ENCODE measurements at regions of chr2 and their contacts with region 1.

Region 1: GRCh38 chr2:101308432-101309210 is at the start of gene RNF149:
- DNase-seq: peak; percentile 87
- H3K4me3 Mint-ChIP-seq: peak within 1 kb of the TSS; percentile 82
- H3K27ac Mint-ChIP-seq: peak within 1 kb of the TSS; percentile 88
- H3K4me1 Mint-ChIP-seq: peaks cover 62% of the 10 kb centered on the region
- H3K27me3 Mint-ChIP-seq: no peaks in the 10 kb centered on the region
- total RNA-seq, gene RNF149: 25.0 to 27.1 TPM

Region 2: DNA sequence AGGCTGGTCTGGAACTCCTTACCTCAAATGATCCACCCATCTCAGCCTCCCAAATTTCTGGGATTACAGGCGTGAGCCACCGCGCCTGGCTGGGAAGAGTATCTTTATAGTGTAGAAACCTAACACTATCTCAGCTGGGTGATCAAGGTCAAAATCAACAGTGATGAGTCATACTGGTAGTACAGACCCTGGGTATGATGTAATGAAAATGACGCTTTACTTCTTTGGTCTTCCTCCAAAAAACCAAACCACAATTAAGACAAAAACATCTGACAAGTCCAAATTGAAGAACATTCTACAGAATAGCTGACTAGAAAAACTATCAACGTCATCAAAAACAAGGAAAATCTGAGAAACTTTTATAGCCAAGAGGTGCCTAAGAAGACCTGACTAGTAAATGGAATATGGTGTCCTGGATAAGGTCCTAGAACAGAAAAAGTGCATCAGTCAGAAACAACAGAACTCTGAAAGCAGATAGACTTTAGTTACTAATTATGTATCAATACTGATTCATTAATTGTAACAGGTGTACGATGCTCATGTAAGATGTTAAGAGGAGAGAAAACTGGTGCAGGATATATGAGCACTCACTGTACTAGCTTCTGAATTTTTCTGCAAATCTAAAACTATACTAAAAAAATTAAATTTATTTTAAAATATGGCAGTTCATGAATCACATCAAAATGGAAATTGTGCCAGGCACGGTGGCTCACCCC is 720.4 kb before region 1 on chr2:
- CTCF ChIA-PET with region 1: no interaction called
- intact Hi-C with region 1: loop called (anchors 5 kb)
- DNase-seq: peak; percentile 34
- H3K4me3 Mint-ChIP-seq: peak overlapping the region; percentile 17
- H3K27ac Mint-ChIP-seq: peak overlapping the region; percentile 54
- H3K4me1 Mint-ChIP-seq: peaks cover 31% of the 10 kb centered on the region
- H3K27me3 Mint-ChIP-seq: no peaks in the 10 kb centered on the region

Region 3: DNA sequence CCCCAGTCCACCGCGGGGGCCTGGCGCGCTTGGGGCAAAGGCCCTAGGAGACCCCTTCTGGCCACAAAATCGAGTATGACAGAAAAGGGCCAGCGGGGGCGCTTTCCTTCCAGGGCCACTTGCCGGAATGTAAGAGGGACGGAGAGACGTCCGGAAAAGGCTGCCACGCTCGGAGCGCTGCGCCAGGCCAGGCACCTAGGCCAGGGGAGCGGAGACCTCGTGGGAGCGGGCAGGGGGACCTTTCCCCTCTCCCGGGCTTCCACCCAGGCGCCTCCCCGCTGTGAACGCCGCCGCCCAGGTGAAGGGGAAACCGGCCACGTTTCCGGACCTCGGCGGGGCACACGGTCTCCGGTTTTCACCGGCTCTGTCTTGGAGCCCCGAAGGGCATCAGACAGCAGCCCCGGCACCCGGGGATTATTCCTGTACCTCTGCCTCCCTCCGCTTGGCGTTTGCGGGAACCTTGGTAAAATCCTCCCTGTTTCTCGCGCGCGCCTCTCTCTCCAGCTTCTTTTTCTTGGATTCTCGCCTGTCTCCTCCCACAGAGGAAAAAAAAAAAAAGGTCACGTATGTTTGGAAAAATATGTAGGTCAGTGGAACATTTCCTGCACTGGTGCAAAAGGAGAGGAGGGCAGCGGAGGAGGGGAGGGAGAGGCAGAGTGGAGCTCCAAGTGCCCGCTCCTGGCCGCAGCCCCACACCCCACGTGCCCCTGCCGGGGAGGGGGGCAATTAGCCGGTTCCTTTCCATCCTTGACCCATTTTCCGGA is 489.8 kb before region 1 on chr2:
- CTCF ChIA-PET with region 1: no interaction called
- intact Hi-C with region 1: loop called (anchors 10 kb)
- DNase-seq: peak; percentile 39
- H3K4me3 Mint-ChIP-seq: peak overlapping the region; percentile 70
- H3K27ac Mint-ChIP-seq: no peak overlapping the region
- H3K4me1 Mint-ChIP-seq: peaks cover 26% of the 10 kb centered on the region
- H3K27me3 Mint-ChIP-seq: peaks cover 15% of the 10 kb centered on the region

Region 4: GRCh38 chr2:101272045-101272784 is 36.4 kb before region 1 on chr2:
- CTCF ChIA-PET with region 1: no interaction called
- intact Hi-C with region 1: loop called (anchors 1 kb)
- DNase-seq: no peak
- H3K4me3 Mint-ChIP-seq: no peak overlapping the region
- H3K27ac Mint-ChIP-seq: peak overlapping the region; percentile 25
- H3K4me1 Mint-ChIP-seq: peaks cover 38% of the 10 kb centered on the region
- H3K27me3 Mint-ChIP-seq: no peaks in the 10 kb centered on the region

Region 5: DNA sequence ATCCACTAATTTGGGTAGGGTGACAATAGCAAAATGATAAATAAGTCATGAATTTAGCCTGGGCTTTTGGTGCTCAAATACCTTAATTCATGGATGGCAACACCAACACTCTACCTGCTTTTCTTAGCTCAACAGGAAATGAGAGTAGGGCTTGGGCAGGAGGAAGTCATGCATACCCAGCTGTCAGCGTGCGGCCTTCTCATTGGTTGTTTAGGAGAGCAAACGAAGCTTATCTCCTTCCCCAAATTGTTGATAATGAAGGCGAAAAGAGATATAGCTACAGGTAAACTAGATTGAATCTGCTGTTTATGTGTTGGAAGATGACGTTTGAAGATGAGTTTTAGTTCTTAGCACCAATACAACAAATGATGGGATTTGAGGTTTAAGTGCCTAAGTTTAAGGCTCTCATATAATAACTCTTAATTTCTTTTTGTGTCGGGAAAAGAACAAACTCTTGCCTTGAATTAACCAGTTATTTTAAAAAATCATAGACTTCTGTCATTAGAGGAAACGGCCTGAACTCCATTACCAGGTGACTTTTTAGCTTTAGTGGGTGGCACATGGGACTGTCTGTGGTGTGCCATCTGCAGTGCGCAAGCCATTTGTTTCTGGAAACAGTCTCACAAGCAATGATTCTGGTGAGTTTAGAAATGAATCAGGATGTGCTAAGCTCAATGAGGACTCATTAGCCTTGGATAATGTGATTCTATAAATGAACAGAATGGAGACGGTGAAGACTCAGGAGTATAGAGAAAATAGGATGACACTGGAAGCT is 408.6 kb after region 1 on chr2:
- CTCF ChIA-PET with region 1: no interaction called
- intact Hi-C with region 1: loop called (anchors 5 kb)
- DNase-seq: peak; percentile 75
- H3K4me3 Mint-ChIP-seq: peak overlapping the region; percentile 38
- H3K27ac Mint-ChIP-seq: peak overlapping the region; percentile 95
- H3K4me1 Mint-ChIP-seq: peaks cover 92% of the 10 kb centered on the region
- H3K27me3 Mint-ChIP-seq: no peaks in the 10 kb centered on the region

Region 6: GRCh38 chr2:101900375-101900774 is 591.8 kb after region 1 on chr2:
- CTCF ChIA-PET with region 1: no interaction called
- intact Hi-C with region 1: loop called (anchors 1 kb)
- DNase-seq: peak; percentile 87
- H3K4me3 Mint-ChIP-seq: no peak overlapping the region
- H3K27ac Mint-ChIP-seq: peak overlapping the region; percentile 87
- H3K4me1 Mint-ChIP-seq: peaks cover 33% of the 10 kb centered on the region
- H3K27me3 Mint-ChIP-seq: peaks cover 2% of the 10 kb centered on the region

Region 7: GRCh38 chr2:101958061-101958460 is 649.4 kb after region 1 on chr2:
- CTCF ChIA-PET with region 1: no interaction called
- intact Hi-C with region 1: no loop called
- DNase-seq: no peak
- H3K4me3 Mint-ChIP-seq: no peak overlapping the region
- H3K27ac Mint-ChIP-seq: no peak overlapping the region
- H3K4me1 Mint-ChIP-seq: peaks cover 3% of the 10 kb centered on the region
- H3K27me3 Mint-ChIP-seq: no peaks in the 10 kb centered on the region

Region 8: GRCh38 chr2:102141970-102142828 is 833.6 kb after region 1 on chr2 and contains the start of gene IL1R1:
- CTCF ChIA-PET with region 1: no interaction called
- intact Hi-C with region 1: loop called (anchors 2 kb)
- DNase-seq: no peak
- H3K4me3 Mint-ChIP-seq: peak within 1 kb of the TSS; percentile 73
- H3K27ac Mint-ChIP-seq: peak within 1 kb of the TSS; percentile 74
- H3K4me1 Mint-ChIP-seq: peaks cover 41% of the 10 kb centered on the region
- H3K27me3 Mint-ChIP-seq: peaks cover 34% of the 10 kb centered on the region
- total RNA-seq, gene IL1R1: 5.7 to 6.7 TPM